ENCODE measurements at regions of chr10 and their contacts with region 1.

Region 1: GRCh38 chr10:4581929-4582328 is 244.1 kb upstream of the AKR1E2 start:
- DNase-seq: no peak
- H3K4me3 ChIP-seq: no peak overlapping the region
- CTCF ChIP-seq: no peak

Region 2: DNA sequence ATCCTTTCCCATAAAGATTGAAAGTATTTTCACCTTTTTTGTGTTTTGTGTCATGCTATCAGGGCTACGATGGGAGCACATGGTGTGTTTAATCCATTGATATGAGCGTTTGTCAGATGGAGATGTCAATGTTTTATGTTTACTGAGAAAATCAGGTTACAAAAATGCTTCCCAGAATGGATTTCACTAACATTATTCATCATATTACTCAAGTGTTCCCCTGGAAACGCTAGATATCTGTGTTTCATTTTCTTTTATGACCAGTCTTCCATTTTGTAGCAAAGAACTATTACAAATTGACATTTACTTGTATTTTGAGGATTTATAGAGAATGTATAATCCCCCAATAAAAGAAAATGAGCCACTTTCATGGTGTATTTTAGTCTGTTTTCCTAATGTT is 49.5 kb before region 1 on chr10:
- in situ Hi-C with region 1: loop called (anchors 5 kb)
- DNase-seq: no peak
- H3K4me3 ChIP-seq: no peak overlapping the region
- CTCF ChIP-seq: no peak

Region 3: GRCh38 chr10:4725917-4726606 is 144.1 kb after region 1 on chr10:
- in situ Hi-C with region 1: no loop called
- DNase-seq: peak; percentile 50
- H3K4me3 ChIP-seq: no peak overlapping the region
- CTCF ChIP-seq: no peak

Measured in astrocyte of the cerebellum (primary cell).